ENCODE measurements at regions of chr18 and their contacts with region 1.

Region 1: DNA sequence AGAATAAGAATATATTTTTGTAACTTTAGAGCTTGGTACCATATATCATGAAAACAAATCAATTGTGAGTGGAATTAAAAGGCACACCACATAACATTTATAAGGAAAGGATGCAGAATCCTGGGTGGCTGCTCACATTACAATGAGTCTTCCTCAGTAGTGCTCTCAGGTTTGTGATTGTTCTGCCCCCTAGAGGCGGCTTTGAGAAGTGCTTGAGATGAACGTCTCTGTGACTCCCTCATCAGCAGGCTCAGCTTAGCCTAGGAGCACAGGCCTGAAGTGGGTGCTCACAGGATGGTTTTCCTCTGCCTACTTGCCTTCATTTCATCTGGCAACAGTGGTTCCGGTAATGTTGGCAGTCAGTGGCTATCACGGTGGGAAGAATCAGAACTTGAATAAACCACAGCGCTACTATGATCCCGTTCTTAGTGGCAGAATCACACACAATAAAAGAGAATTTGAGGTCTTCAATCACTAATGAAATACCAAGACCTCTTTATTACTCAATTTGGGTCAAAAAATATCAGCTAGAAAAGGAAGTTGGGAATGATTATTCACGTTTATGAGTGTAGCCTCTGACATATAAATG is 38.1 kb upstream of the B4GALT6 start:
- DNase-seq: peak; percentile 97
- H3K4me3 ChIP-seq: no peak overlapping the region
- H3K27ac ChIP-seq: no peak overlapping the region
- H3K4me1 ChIP-seq: peaks cover 4 to 22% (median 19%) of the 10 kb centered on the region in 4 donors
- H3K27me3 ChIP-seq: no peaks in the 10 kb centered on the region
- CTCF ChIP-seq: peak; percentile 70 to 93 (median 77)
- EP300 ChIP-seq: no peak
- POLR2A ChIP-seq: no peak

Region 2: GRCh38 chr18:31555971-31556747 is 166.3 kb before region 1 on chr18:
- intact Hi-C with region 1: loop called (anchors 2 kb)
- DNase-seq: no peak
- H3K4me3 ChIP-seq: no peak overlapping the region
- H3K27ac ChIP-seq: no peak overlapping the region
- H3K4me1 ChIP-seq: peaks cover 0 to 5% (median 0%) of the 10 kb centered on the region in 4 donors
- H3K27me3 ChIP-seq: no peaks in the 10 kb centered on the region
- CTCF ChIP-seq: peak; percentile 72 to 79 (median 76)
- EP300 ChIP-seq: no peak
- POLR2A ChIP-seq: no peak

Region 3: DNA sequence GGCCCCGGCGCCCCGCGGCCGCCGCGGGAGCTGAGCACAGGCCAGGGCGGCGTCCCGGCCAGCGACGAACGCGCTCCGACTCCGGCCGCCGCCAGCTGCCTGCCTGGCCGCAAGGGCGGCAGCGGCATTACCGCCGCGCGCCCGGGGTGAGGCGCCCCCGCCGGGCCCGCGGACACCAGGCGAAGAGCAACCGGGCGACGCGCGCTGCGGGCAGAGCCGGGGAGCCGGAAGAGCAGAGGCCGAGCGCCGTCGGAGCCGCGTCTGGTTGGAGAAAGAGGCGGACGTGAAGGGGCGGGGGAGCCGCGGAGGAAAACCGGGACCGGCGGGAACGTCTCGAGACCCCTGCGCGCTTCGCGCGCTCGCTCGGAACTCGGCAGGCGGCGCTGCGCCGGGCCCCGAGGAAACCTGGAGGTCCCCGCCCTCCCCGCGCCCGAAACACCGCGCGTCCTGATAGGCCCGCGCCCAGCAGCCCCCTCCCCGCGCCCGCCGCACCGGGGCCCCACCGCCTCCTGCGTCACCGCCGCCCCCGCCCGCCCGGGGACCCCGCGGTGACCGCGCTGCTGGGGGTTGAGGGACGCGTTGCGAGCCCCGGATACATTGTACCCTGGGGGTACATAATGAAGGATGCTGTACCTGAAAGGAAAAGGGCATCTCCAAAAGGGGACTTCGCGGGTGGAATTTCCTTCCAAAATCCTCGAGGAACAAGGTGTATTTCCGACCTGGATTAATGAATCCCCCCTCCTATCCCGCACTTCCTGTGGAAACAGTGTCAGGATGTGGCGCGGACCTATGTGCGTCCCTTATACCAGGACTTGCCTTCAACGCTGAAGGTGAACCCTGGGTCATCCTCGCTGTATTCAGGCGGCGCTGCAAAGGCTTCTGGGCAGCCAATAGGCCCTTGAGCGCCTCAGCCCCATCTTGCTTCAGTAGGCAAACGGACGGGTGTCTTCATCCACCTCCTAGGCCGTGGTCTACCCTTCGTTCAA is 37.1 kb before region 1 on chr18:
- intact Hi-C with region 1: loop called (anchors 5 kb)
- DNase-seq: no peak
- H3K4me3 ChIP-seq: peak overlapping the region; percentile 78 to 84 (median 80)
- H3K27ac ChIP-seq: peak overlapping the region; percentile 82 to 90 (median 86)
- H3K4me1 ChIP-seq: peaks cover 3 to 37% (median 23%) of the 10 kb centered on the region in 4 donors
- H3K27me3 ChIP-seq: no peaks in the 10 kb centered on the region
- CTCF ChIP-seq: peak; percentile 23 to 51 (median 49)
- EP300 ChIP-seq: no peak
- POLR2A ChIP-seq: no peak

Measured in esophagus muscularis mucosa (tissue), 4 donors.